Caco-2 (cell line): ENCODE measurements at regions of chr2 and their contacts with region 1.

Region 1: DNA sequence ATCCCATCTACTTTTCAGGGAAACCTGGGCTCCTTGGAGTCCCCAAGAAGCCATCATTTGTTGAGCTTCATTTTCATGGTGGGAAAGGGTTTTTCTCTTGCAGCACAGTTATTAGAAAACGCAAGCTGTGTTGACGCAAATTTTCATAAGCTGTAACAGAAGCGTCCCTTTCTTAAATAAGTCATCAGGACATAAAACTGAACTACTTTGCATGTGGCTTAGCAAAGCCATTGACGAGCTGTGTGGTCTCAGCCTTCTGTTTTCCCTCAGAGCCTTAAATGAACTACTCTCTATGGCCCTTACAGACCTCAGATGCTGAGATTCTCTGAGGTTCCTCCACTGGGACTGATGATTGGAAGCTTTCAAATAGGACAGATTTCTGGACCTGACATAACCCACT is 85.1 kb downstream of the ARL4C start:
- DNase-seq: no peak
- H3K4me3 ChIP-seq: no peak overlapping the region
- H3K4me3 Mint-ChIP-seq: no peak overlapping the region
- H3K27ac Mint-ChIP-seq: peak overlapping the region; percentile 94
- H3K4me1 ChIP-seq: peaks cover 44% of the 10 kb centered on the region
- H3K4me1 Mint-ChIP-seq: peaks cover 36% of the 10 kb centered on the region
- H3K27me3 ChIP-seq: no peaks in the 10 kb centered on the region
- H3K27me3 Mint-ChIP-seq: no peaks in the 10 kb centered on the region
- CTCF ChIP-seq: no peak

Region 2: DNA sequence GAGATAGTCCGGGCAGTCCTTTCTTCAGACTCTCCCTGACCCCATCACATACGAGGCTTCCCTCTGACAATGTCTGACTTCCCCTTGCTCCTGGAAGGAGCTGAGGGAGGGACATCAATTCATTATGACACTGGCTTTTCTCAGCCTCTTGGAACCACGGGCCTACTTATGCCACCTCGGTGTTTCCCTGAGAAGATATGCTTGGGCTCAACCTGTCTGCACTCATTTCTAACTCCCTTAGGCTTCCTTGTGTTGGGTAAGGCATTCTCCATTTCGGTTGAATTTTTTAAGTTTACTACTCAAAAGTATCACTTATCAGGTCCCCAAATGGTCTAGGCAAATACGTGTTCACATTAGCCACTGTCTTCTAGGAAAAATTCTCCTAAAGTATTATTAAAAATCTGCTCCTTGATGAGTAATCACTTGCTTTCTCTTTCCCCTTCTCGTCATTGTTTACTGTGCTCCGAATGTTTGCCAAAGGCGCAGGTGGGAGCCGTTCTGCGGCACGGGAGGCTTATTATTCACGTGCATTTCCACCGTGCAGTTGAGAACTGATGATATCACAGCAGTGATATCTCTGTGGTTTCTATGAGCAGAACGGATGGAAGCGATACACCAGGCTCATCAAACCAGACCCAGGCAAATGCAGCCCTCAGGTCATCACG is 52.0 kb after region 1 on chr2:
- CTCF ChIA-PET with region 1: no interaction called
- POLR2A ChIA-PET with region 1: no interaction called
- intact Hi-C with region 1: loop called (anchors 1 kb)
- DNase-seq: peak; percentile 51 to 67
- H3K4me3 ChIP-seq: no peak overlapping the region
- H3K4me3 Mint-ChIP-seq: peak overlapping the region; percentile 47
- H3K27ac Mint-ChIP-seq: peak overlapping the region; percentile 95
- H3K4me1 ChIP-seq: peaks cover 70% of the 10 kb centered on the region
- H3K4me1 Mint-ChIP-seq: peaks cover 33% of the 10 kb centered on the region
- H3K27me3 ChIP-seq: no peaks in the 10 kb centered on the region
- H3K27me3 Mint-ChIP-seq: no peaks in the 10 kb centered on the region
- CTCF ChIP-seq: no peak

Region 3: GRCh38 chr2:234494361-234495250 is 82.8 kb after region 1 on chr2:
- CTCF ChIA-PET with region 1: interaction called, 3 read pairs
- POLR2A ChIA-PET with region 1: interaction called, 5 read pairs
- intact Hi-C with region 1: loop called (anchors 2 kb)
- DNase-seq: no peak
- H3K4me3 ChIP-seq: peak overlapping the region; percentile 96
- H3K4me3 Mint-ChIP-seq: peak overlapping the region; percentile 95
- H3K27ac Mint-ChIP-seq: peak overlapping the region; percentile 91
- H3K4me1 ChIP-seq: peaks cover 6% of the 10 kb centered on the region
- H3K4me1 Mint-ChIP-seq: no peaks in the 10 kb centered on the region
- H3K27me3 ChIP-seq: no peaks in the 10 kb centered on the region
- H3K27me3 Mint-ChIP-seq: no peaks in the 10 kb centered on the region
- CTCF ChIP-seq: no peak